OCI-LY7 (cell line): ENCODE measurements at regions of chr11 and their contacts with region 1.

Region 1: DNA sequence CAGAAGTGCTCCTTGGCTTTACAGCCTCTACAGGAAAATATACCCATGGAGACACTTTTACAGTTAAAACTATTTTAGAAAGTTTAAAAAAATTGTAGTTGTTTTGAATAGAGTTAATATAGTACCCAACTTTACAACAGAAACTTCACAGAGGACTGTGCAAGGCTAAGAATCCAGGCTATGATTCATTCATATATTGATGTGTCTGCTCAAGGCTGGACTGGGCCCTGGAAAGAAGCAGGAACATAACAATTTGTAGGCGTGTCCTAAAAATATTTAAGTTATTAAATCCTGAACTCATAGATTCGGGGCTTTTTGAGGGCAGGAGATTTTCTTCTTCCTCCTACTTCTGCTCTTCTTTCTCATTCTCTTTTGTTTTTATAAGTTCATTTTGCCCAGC is 291.5 kb upstream of the CCDC179 start:
- DNase-seq: no peak
- H3K4me3 ChIP-seq: no peak overlapping the region
- H3K27ac ChIP-seq: no peak overlapping the region
- H3K4me1 ChIP-seq: no peaks in the 10 kb centered on the region
- CTCF ChIP-seq: no peak

Region 2: DNA sequence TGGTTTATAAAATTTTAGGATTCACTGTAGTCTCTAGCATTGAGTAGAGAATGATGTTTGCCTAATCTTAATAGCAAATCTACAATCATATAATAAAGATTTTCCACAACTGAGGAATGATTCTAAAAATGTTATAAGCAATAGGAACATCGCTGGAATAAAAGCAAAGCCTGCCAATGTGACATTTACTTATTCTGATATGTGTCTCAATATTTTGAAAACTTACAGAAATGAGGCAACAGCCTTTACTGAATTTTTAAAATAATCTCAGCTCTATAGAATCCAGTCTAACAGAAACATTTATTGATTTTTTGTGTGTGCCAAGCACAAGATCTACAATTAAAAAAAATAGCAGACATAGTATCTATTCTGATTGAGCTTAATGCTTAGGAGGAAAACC is 12.2 kb after region 1 on chr11:
- CTCF ChIA-PET with region 1: no interaction called
- POLR2A ChIA-PET with region 1: interaction called, 10 read pairs
- intact Hi-C with region 1: no loop called
- DNase-seq: no peak
- H3K4me3 ChIP-seq: no peak overlapping the region
- H3K27ac ChIP-seq: no peak overlapping the region
- H3K4me1 ChIP-seq: no peaks in the 10 kb centered on the region
- CTCF ChIP-seq: no peak